ENCODE measurements at regions of chr3 and their contacts with region 1.

Region 1: DNA sequence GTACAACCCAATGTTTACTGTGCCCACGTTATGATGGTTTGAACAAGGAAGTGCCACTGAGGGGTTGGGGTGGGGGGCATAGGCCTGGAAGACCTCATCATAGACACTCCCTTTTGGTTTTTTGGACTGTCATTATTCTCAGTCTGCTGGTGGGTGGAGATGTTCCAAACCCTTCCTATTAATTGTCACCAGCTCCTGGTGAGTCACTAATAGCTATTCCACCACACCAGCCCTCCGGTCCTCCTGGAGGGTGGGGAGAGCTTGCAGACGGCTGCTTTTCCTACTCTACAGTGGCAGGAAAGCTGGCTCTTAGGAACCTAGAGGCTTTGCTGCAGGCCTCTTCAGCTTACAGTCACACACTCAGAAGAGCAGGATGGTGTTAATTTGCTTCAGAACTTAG is 9.0 kb upstream of the COPG1 start:
- DNase-seq: peak; percentile 61 to 65
- H3K4me3 ChIP-seq: no peak overlapping the region
- H3K27ac ChIP-seq: peak overlapping the region; percentile 52
- H3K4me1 ChIP-seq: peaks cover 36% of the 10 kb centered on the region
- H3K27me3 ChIP-seq: no peaks in the 10 kb centered on the region
- CTCF ChIP-seq: no peak

Region 2: DNA sequence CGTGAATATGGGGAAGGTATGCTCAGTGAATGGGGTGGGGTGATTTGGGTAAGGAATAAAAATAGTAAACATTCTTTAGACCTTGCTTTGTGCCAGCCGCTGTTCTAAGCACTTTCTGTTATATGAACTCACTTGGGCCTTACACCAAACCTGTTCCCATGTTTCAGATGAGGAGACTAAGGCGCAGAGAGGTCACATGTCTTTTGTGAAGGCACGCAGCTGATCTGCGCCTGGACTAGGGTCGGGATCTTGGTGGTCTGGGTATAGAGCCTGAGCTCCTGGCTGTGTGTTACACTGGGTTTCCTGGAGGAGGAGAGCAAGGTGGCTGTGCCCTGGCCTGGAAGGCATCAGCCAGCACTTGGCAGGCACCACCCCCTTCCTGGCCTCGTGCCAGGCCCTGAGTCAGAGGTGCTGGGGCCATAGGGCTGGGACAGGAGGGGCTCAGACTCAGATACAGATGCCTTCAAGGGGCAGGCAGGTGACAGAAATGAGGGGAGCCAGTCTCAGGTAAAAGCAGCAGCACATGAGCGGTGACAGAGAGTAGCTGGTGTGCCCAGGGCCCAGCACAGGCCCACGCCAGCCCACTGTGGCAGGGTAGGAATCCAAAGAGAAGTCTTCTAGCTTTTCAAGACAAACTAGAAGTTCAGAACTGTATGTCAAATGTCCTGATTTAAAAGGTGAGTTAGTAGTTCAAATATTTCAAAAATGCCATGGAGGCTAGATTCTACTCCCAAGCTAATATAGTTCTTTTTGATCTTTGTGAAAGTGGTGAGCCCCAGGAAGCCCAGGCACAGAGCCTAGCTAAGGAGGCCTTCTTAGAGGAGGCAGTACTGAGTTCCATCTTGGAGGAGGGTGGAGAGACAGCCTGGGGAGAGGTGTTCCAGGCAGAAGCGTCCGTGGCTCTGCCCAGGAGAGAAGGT is 856.9 kb before region 1 on chr3:
- CTCF ChIA-PET with region 1: no interaction called
- POLR2A ChIA-PET with region 1: no interaction called
- intact Hi-C with region 1: no loop called
- DNase-seq: peak; percentile 83 to 95
- H3K4me3 ChIP-seq: no peak overlapping the region
- H3K27ac ChIP-seq: peak overlapping the region; percentile 62
- H3K4me1 ChIP-seq: peaks cover 31% of the 10 kb centered on the region
- H3K27me3 ChIP-seq: no peaks in the 10 kb centered on the region
- CTCF ChIP-seq: no peak

Region 3: GRCh38 chr3:129160891-129161859 is 79.3 kb before region 1 on chr3 and contains the start of gene ISY1:
- CTCF ChIA-PET with region 1: interaction called, 4 read pairs
- POLR2A ChIA-PET with region 1: interaction called, 15 read pairs
- intact Hi-C with region 1: loop called (anchors 1 kb)
- DNase-seq: peak; percentile 86 to 89
- H3K4me3 ChIP-seq: peak within 1 kb of the TSS; percentile 78
- H3K27ac ChIP-seq: peak within 1 kb of the TSS; percentile 88
- H3K4me1 ChIP-seq: peaks cover 21% of the 10 kb centered on the region
- H3K27me3 ChIP-seq: no peaks in the 10 kb centered on the region
- CTCF ChIP-seq: peak; percentile 84
- total RNA-seq, gene ISY1: 62.3 and 63.1 TPM in 2 replicates